PC-3 (cell line): ENCODE measurements at regions of chr13 and their contacts with region 1.

Region 1: GRCh38 chr13:44710576-44710975 is 134.4 kb upstream of the TSC22D1 start:
- DNase-seq: peak; percentile 89
- ATAC-seq: peak; percentile 81
- H3K4me3 ChIP-seq: no peak overlapping the region
- H3K27ac ChIP-seq: peak overlapping the region; percentile 98
- H3K4me1 ChIP-seq: peaks cover 40% of the 10 kb centered on the region
- H3K27me3 ChIP-seq: no peaks in the 10 kb centered on the region
- CTCF ChIP-seq: no peak

Region 2: GRCh38 chr13:44543369-44543768 is 167.2 kb before region 1 on chr13:
- CTCF ChIA-PET with region 1: interaction called, 12 read pairs
- POLR2A ChIA-PET with region 1: no interaction called
- intact Hi-C with region 1: no loop called
- DNase-seq: no peak
- ATAC-seq: no peak
- H3K4me3 ChIP-seq: no peak overlapping the region
- H3K27ac ChIP-seq: no peak overlapping the region
- H3K4me1 ChIP-seq: no peaks in the 10 kb centered on the region
- H3K27me3 ChIP-seq: no peaks in the 10 kb centered on the region
- CTCF ChIP-seq: no peak

Region 3: GRCh38 chr13:44758630-44759383 is 48.2 kb after region 1 on chr13:
- CTCF ChIA-PET with region 1: no interaction called
- POLR2A ChIA-PET with region 1: interaction called, 6 read pairs
- intact Hi-C with region 1: loop called (anchors 2 kb)
- DNase-seq: peak; percentile 88
- ATAC-seq: peak; percentile 97
- H3K4me3 ChIP-seq: peak overlapping the region; percentile 32; the same call in 1 of the 2 replicates
- H3K27ac ChIP-seq: peak overlapping the region; percentile 94
- H3K4me1 ChIP-seq: peaks cover 45% of the 10 kb centered on the region
- H3K27me3 ChIP-seq: no peaks in the 10 kb centered on the region
- CTCF ChIP-seq: no peak

Region 4: GRCh38 chr13:44815623-44816022 is 105.0 kb after region 1 on chr13:
- CTCF ChIA-PET with region 1: interaction called, 7 read pairs
- POLR2A ChIA-PET with region 1: no interaction called
- intact Hi-C with region 1: loop called (anchors 2 kb)
- DNase-seq: peak; percentile 91
- ATAC-seq: peak; percentile 81
- H3K4me3 ChIP-seq: no peak overlapping the region
- H3K27ac ChIP-seq: peak overlapping the region; percentile 95
- H3K4me1 ChIP-seq: peaks cover 66% of the 10 kb centered on the region
- H3K27me3 ChIP-seq: no peaks in the 10 kb centered on the region
- CTCF ChIP-seq: no peak

Region 5: DNA sequence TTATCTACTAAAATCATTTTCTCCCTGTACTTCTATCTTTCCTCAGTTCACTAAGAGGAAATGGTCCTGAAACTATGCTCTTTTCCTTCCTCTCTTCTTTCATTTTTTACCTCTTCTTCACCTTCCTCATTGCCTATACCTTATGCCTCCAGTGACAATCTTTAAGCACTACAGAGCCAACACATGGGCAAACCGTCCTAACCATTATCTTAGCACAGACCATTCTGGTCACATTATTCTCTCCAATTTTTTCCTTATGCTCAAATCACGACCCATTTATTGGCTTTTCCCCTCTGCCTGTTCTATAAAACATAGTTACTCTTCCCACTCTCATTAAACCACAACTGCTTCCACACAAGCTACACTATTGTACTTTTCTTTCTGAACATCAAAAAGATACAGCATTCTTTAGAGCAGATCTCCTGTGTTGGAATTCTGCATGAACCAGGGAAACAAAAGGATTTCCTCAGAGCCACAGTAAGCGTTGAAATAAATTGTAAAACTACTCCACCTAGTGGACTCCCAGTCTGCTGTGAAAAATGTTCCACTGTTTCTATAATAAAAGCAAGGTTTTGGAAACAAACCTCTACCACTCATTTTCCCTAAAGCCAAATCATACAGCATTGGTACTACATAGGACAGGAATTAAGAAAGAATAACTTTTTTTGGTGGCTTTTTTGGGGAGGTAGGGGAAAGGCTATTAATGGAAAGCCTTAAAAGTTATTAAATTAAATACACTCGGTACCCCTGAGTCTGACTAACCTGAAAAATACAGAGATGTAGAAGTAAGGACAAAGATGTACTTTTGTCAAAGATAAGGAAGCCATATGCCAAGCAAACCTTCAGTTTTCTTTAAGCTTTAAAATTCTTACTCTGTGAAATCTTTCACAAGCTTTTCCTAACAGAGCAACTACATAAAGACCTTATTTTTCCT is 259.2 kb after region 1 on chr13:
- CTCF ChIA-PET with region 1: no interaction called
- POLR2A ChIA-PET with region 1: no interaction called
- intact Hi-C with region 1: loop called (anchors 5 kb)
- DNase-seq: peak; percentile 70
- ATAC-seq: peak; percentile 74
- H3K4me3 ChIP-seq: no peak overlapping the region
- H3K27ac ChIP-seq: no peak overlapping the region
- H3K4me1 ChIP-seq: peaks cover 6% of the 10 kb centered on the region; the same call in 1 of the 2 replicates
- H3K27me3 ChIP-seq: no peaks in the 10 kb centered on the region
- CTCF ChIP-seq: peak; percentile 86